Calu3 (cell line): ENCODE measurements at regions of chr19 and their contacts with region 1.

Region 1: DNA sequence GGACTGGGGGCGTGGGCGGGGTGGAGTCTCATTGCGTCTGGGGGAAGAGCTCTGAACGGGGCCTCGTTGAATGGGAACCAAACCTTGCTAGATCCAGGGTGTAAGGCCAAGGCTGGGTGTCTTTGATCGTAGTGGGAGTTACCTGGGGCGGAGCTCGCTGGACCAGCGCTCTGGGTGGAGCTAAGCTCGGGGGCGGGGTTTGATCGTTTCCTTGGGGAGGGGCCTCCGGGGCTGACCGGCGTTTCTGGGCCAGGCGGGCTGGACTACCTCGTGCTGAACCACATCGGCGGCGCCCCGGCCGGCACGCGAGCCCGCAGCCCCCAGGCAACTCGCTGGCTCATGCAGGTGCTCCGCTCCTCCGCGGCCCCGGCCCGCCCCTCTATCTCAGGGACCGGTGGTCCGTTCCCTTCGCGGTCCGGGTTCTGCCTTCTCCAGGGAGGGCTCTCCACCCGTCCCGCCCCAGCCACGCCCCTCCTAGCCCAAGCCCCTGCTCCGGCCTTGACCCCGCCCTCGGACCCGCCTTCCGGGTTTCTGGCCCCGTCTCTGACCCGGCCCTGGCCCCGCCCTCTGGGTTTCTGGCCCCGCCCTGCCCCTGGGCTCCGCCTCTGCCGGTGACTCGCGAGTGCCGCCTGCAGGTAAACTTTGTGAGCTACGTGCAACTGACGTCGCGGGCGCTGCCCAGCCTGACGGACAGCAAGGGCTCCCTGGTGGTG is 3.3 kb upstream of the RPL36 start:
- DNase-seq: peak; percentile 97
- H3K4me3 Mint-ChIP-seq: peak overlapping the region; percentile 63
- H3K27ac Mint-ChIP-seq: no peak overlapping the region
- H3K4me1 Mint-ChIP-seq: peaks cover 1% of the 10 kb centered on the region
- H3K27me3 Mint-ChIP-seq: no peaks in the 10 kb centered on the region
- CTCF ChIP-seq: peak; percentile 41

Region 2: GRCh38 chr19:5947435-5947834 is 260.6 kb after region 1 on chr19:
- CTCF ChIA-PET with region 1: interaction called, 11 read pairs
- intact Hi-C with region 1: no loop called
- DNase-seq: no peak
- H3K4me3 Mint-ChIP-seq: no peak overlapping the region
- H3K27ac Mint-ChIP-seq: no peak overlapping the region
- H3K4me1 Mint-ChIP-seq: no peaks in the 10 kb centered on the region
- H3K27me3 Mint-ChIP-seq: no peaks in the 10 kb centered on the region
- CTCF ChIP-seq: no peak